ENCODE measurements at regions of chr14 and their contacts with region 1.

Region 1: DNA sequence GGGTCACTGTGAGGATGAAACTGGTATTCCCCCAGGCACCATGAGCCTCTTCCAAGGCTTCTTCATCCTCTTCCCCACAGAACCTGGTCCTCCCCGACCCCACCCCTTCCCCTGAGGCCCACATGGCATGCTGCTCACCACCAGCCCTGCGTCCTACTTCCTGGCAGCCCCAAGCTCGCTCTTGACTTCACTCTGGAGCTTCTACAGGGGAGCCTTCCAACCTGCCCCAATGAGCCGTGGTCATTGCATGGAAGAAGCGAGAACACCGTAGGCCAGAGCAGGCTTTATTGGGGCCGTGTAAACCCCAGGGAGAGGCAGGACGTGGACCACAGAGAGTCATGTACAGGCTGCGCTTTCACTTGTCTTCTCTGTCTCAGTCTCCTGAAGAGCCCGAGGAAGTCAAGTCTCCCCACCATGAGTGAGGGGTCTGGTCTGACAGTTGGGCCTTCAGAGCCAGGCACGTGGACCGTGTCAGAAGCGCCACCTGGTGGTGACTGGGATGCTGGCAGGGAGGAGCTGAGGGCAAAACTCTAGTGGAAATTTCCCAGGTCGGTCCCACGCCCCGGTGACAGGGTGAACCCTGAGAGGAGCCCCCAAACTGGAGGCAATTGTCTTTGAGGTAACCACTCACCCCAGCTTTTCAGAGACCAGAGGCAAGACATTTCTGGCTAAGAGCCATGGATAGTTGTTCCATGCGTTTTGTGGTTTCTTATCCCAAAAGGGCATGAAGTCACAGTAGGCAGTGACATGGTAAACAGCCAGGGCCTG is 17.5 kb downstream of the RPS6KL1 start:
- DNase-seq: peak; percentile 78
- H3K4me3 Mint-ChIP-seq: no peak overlapping the region
- H3K27ac Mint-ChIP-seq: no peak overlapping the region
- H3K4me1 Mint-ChIP-seq: no peaks in the 10 kb centered on the region
- H3K27me3 Mint-ChIP-seq: no peaks in the 10 kb centered on the region
- CTCF ChIP-seq: peak; percentile 90

Region 2: GRCh38 chr14:74852927-74853514 is 52.5 kb before region 1 on chr14:
- CTCF ChIA-PET with region 1: no interaction called
- intact Hi-C with region 1: no loop called
- DNase-seq: no peak
- H3K4me3 Mint-ChIP-seq: no peak overlapping the region
- H3K27ac Mint-ChIP-seq: no peak overlapping the region
- H3K4me1 Mint-ChIP-seq: no peaks in the 10 kb centered on the region
- H3K27me3 Mint-ChIP-seq: no peaks in the 10 kb centered on the region
- CTCF ChIP-seq: no peak

Region 3: GRCh38 chr14:74881431-74882361 is 23.9 kb before region 1 on chr14 and contains the start of gene DLST:
- CTCF ChIA-PET with region 1: interaction called, 15 read pairs
- intact Hi-C with region 1: no loop called
- DNase-seq: peak; percentile 92
- H3K4me3 Mint-ChIP-seq: peak within 1 kb of the TSS; percentile 95
- H3K27ac Mint-ChIP-seq: peak within 1 kb of the TSS; percentile 92
- H3K4me1 Mint-ChIP-seq: peaks cover 49% of the 10 kb centered on the region
- H3K27me3 Mint-ChIP-seq: no peaks in the 10 kb centered on the region
- CTCF ChIP-seq: no peak
- total RNA-seq, gene DLST: 84.2 and 89.1 TPM in 2 replicates

Region 4: GRCh38 chr14:74955229-74956026 is 49.9 kb after region 1 on chr14 and contains the start of gene PGF:
- CTCF ChIA-PET with region 1: no interaction called
- intact Hi-C with region 1: no loop called
- DNase-seq: peak; percentile 57
- H3K4me3 Mint-ChIP-seq: peak within 1 kb of the TSS; percentile 65
- H3K27ac Mint-ChIP-seq: no peak within 1 kb of the TSS
- H3K4me1 Mint-ChIP-seq: no peaks in the 10 kb centered on the region
- H3K27me3 Mint-ChIP-seq: peaks cover 15% of the 10 kb centered on the region
- CTCF ChIP-seq: no peak
- total RNA-seq, gene PGF: 1.2 and 2.1 TPM in 2 replicates

Region 5: DNA sequence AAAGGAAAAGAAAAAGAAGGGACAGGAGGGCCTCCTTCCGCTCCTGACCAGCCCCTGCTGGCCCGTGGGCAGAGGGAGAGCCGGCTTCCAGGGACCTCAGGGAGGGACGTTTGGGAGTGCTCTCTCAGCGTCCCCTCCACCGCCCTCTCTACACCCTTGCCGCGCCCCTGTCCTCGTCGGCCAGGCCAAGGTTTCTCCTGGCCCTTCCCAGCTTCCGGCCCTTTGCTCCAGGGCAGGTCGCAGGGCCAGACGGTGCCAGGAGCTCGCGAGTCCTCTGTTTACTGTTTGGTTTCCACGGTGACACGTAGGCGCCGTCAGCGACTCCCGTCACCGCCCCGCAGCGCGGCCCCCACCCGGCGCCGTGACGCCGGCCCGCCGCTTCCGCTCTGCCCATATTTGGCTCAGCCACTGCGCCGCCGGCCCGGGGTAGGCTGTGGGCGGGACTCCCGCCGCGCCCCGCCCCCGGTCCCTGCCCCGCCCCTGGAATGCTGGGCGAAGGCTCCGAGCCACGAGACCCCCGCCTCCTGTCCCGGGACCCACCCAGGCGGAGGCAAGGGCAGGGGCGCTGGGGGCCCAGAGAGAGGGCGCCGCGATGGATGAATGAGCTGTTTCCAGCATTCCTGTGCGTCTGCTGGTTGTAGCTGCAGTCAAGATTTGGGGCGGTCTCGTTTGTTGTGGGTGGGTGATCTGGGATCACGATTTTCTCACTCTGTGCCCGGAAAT is 388.5 kb after region 1 on chr14:
- CTCF ChIA-PET with region 1: no interaction called
- intact Hi-C with region 1: no loop called
- DNase-seq: peak; percentile 96
- H3K4me3 Mint-ChIP-seq: peak overlapping the region; percentile 60
- H3K27ac Mint-ChIP-seq: peak overlapping the region; percentile 97
- H3K4me1 Mint-ChIP-seq: peaks cover 21% of the 10 kb centered on the region
- H3K27me3 Mint-ChIP-seq: no peaks in the 10 kb centered on the region
- CTCF ChIP-seq: no peak